Vagina (tissue), 2 donors: ENCODE measurements at regions of chr9 and their contacts with region 1.

Region 1: DNA sequence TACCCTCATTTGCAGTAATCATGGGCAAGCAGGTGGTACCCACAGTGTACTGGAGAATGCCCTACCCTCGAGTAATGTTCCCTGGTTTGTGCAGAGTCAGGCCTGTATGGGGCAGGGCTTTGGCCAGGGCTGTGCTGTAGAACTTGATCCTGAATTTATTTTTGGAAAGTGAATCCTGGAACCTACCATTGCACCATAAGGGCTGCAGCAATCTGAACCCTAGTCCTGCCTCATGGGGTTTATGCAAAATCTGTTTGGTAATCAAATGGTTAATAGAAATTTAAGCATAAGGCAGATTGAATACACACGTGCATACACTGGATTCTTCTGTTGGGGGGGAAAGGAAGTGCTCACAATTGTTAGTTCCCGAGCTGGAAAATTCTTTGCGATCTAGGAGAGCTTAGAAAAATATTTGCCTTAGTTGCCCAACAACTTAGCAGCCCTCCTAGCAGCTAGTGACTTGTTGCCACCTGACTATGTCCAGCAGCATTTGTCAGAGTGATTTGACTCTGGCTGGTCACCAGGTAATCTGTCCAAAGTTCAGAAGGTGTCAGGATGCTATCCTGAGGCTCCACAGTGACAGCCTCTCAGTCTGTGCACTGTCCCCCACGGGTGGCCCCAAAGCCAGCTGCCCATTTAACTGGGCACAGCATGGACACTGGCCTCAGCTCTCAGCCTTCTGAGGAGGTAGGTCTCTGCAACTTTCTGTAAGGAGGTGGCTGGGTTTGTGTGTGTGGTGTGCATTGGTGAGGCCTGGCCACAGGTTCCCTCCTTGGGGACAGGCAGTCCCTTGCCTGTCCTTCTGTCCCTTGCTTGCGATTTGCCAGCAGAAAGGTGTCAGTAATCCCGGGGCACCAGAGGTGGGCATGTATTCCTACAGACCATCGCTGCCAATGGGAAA is 8.3 kb downstream of the MVB12B start:
- DNase-seq: no peak
- H3K4me3 ChIP-seq: no peak overlapping the region
- H3K27ac ChIP-seq: no peak overlapping the region
- H3K4me1 ChIP-seq: peaks cover 47% of the 10 kb centered on the region
- H3K27me3 ChIP-seq: no peaks in the 10 kb centered on the region
- CTCF ChIP-seq: no peak
- POLR2A ChIP-seq: no peak

Region 2: DNA sequence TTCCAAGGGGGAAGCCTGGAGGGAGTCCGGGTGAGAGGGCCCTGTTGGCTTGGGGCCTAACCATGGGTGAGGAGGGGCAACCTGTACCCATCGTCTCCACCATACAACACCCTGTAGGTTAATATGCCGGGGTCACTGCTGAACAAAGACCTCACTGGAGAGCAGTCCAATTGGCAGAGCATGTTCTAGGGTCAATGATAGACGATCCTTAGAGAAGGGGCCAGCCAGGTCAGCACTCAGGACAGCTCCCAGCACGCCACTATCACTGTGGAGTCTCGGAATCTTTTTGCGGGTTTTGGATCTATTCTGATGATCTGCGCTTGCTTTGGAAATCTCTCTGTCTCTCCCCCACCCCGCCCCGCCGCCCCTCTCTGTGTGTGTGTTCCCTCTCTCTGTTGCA is 226.7 kb before region 1 on chr9:
- intact Hi-C with region 1: no loop called
- DNase-seq: no peak
- H3K4me3 ChIP-seq: no peak overlapping the region
- H3K27ac ChIP-seq: no peak overlapping the region
- H3K4me1 ChIP-seq: no peaks in the 10 kb centered on the region
- H3K27me3 ChIP-seq: no peaks in the 10 kb centered on the region
- CTCF ChIP-seq: no peak
- POLR2A ChIP-seq: no peak

Region 3: DNA sequence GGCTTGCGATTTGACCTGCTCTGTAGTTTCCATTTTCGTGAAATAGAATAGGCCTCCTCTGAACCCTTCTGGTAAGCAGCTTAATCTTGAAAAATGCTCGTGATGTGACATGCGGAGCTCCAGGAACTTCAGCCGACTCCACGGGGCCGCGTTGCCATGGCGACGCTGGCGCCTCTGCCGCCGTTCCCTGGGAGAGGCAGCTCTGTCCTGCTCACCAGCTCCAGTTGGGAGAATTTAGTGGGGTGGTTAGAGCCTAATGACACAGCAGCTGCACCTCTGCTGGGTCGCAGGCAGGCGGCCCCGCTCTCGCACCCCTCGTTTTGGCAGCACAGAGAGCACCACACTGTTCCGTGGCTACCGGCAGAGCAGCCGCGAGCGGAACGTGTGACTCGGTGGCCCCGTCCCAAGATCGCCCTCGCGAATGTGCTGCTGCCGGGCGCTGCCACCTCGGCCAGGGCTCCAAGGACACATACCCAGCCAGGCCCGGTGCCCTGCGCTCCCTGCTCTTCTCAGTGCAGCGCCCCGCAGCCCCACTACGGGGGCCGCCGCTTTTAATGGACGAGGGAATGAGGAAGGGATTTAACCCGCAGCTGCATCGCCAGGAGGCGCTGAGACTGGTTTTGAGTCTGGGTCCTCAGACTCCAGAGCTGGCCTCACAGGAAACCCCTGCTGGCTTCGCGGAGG is 147.5 kb after region 1 on chr9:
- intact Hi-C with region 1: loop called (anchors 10 kb)
- DNase-seq: no peak
- H3K4me3 ChIP-seq: no peak overlapping the region
- H3K27ac ChIP-seq: peak overlapping the region; percentile 35
- H3K4me1 ChIP-seq: no peaks in the 10 kb centered on the region
- H3K27me3 ChIP-seq: no peaks in the 10 kb centered on the region
- CTCF ChIP-seq: no peak
- POLR2A ChIP-seq: no peak

Region 4: GRCh38 chr9:126965541-126966428 is 630.8 kb after region 1 on chr9:
- intact Hi-C with region 1: no loop called
- DNase-seq: no peak
- H3K4me3 ChIP-seq: no peak overlapping the region
- H3K27ac ChIP-seq: no peak overlapping the region
- H3K4me1 ChIP-seq: no peaks in the 10 kb centered on the region
- H3K27me3 ChIP-seq: no peaks in the 10 kb centered on the region
- CTCF ChIP-seq: peak in 2 of 3 experiments; percentile 30 to 63
- POLR2A ChIP-seq: no peak